Activated CD8-positive, alpha-beta T cell treated with anti-CD3 and anti-CD28 coated beads for 36 hours (primary cell): ENCODE measurements at regions of chr18 and their contacts with region 1.

Region 1: DNA sequence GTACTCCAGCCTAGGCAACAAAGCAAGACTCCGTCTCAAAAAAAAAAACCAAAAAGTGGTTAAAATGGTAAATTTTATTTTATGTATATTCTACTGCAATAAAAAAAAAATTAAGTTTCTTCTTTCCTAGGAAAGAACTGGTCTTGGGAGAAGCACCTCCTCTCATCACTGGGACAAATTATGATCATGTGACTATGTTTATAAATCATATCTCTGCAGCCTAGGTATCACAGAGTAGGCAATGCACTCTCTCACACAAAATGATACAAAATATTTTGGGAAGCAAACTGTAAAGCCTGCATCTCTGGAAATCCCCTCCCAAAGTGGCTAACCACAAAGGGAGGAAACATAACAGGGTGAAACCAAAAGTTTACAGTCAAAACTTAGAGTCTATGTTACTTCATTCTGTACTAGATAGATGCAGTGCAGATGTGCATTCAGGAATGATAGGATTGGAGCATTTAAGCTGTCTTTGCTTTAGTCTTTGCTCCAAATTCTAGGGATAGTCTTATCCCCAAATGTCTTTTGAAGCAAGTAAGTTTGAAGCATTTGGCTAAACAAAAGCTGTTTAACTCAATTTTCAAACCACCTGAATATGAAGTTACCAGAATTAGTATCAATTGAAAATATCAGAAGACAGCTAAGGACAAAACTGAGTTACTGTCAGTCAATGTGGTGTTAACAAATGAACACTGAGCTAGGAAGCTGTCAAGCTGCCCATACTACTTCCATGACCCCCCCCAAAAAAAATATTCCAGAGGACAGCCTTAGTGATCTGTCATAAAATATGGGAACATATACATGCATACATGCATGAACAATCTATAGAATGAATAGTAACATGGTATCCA is 21.1 kb upstream of the MALT1 start:
- DNase-seq: peak; percentile 59
- ATAC-seq: peak; percentile 92
- H3K4me3 Mint-ChIP-seq: no peak overlapping the region
- H3K27ac Mint-ChIP-seq: no peak overlapping the region
- H3K4me1 Mint-ChIP-seq: peaks cover 45% of the 10 kb centered on the region
- H3K27me3 Mint-ChIP-seq: no peaks in the 10 kb centered on the region
- CTCF ChIP-seq: no peak

Region 2: DNA sequence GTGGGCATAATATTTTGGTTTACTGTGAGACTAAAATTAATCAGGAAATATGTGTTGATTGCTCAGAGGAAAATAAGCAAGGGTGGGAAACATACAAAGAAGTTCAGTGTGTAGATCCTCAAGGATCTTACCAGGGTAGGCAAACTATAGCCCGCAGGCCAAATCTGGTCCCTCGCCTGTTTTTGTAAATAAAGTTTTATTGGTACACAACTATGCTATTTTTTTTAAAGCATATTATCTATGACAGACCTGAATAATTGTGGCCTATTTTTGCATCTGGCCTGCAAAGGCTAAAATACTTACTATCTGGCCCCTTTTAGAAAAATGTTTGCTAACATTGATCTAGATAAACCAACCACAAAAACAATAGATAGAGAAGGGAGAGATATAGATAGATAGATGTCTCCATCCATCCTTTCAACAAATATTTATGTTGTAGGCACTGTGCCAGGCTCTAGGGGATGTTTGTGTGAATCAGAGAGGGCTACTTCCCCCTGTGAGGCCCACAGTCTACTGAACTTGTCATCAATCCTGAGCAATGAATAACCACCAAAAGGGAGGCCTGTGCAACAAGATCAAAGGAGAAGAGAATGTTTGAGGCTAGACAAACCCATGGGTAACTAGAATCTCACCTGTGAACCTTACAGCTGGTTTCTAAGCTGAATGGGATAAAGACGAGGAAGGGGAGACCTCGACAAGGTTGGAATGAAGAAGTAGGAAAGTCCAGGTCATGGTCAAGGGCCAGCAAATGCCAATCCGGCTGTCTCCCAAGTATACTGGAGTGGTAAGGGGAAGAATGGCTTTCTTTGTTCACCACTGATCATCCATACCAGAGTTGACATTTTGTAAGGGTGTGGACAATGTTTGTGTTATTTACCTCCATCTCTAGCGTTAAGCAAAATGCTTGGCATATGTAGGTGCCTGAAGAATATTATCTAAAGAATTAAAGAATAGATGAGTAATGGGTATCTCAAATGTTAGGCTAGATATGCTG is 44.9 kb before region 1 on chr18:
- CTCF ChIA-PET with region 1: no interaction called
- POLR2A ChIA-PET with region 1: no interaction called
- intact Hi-C with region 1: no loop called
- DNase-seq: peak; percentile 80
- ATAC-seq: peak; percentile 90
- H3K4me3 Mint-ChIP-seq: no peak overlapping the region
- H3K27ac Mint-ChIP-seq: peak overlapping the region; percentile 31
- H3K4me1 Mint-ChIP-seq: peaks cover 50% of the 10 kb centered on the region
- H3K27me3 Mint-ChIP-seq: no peaks in the 10 kb centered on the region
- CTCF ChIP-seq: no peak

Region 3: GRCh38 chr18:58615140-58616132 is 34.8 kb before region 1 on chr18:
- CTCF ChIA-PET with region 1: no interaction called
- POLR2A ChIA-PET with region 1: no interaction called
- intact Hi-C with region 1: loop called (anchors 5 kb)
- DNase-seq: peak; percentile 89
- ATAC-seq: peak; percentile 97
- H3K4me3 Mint-ChIP-seq: peak overlapping the region; percentile 49
- H3K27ac Mint-ChIP-seq: peak overlapping the region; percentile 96
- H3K4me1 Mint-ChIP-seq: peaks cover 39% of the 10 kb centered on the region
- H3K27me3 Mint-ChIP-seq: no peaks in the 10 kb centered on the region
- CTCF ChIP-seq: no peak